Naive thymus-derived CD4-positive, alpha-beta T cell (primary cell): ENCODE measurements at regions of chr12 and their contacts with region 1.

Region 1: GRCh38 chr12:71840231-71840847 is 780 bp downstream of the TBC1D15 start:
- DNase-seq: peak in 2 of 9 donors; percentile 22 to 59
- ATAC-seq: peak; percentile 21
- H3K4me3 ChIP-seq: peak overlapping the region; percentile 80
- H3K4me3 Mint-ChIP-seq: peak overlapping the region; percentile 91 to 97 (median 94)
- H3K27ac ChIP-seq: peak overlapping the region; percentile 96
- H3K27ac Mint-ChIP-seq: peak overlapping the region; percentile 96 to 100 (median 99)
- H3K4me1 ChIP-seq: peaks cover 14 to 35% of the 10 kb centered on the region in 2 donors
- H3K4me1 Mint-ChIP-seq: peaks cover 29 to 69% (median 48%) of the 10 kb centered on the region in 7 donors
- H3K27me3 ChIP-seq: no peaks in the 10 kb centered on the region
- H3K27me3 Mint-ChIP-seq: no peaks in the 10 kb centered on the region

Region 2: DNA sequence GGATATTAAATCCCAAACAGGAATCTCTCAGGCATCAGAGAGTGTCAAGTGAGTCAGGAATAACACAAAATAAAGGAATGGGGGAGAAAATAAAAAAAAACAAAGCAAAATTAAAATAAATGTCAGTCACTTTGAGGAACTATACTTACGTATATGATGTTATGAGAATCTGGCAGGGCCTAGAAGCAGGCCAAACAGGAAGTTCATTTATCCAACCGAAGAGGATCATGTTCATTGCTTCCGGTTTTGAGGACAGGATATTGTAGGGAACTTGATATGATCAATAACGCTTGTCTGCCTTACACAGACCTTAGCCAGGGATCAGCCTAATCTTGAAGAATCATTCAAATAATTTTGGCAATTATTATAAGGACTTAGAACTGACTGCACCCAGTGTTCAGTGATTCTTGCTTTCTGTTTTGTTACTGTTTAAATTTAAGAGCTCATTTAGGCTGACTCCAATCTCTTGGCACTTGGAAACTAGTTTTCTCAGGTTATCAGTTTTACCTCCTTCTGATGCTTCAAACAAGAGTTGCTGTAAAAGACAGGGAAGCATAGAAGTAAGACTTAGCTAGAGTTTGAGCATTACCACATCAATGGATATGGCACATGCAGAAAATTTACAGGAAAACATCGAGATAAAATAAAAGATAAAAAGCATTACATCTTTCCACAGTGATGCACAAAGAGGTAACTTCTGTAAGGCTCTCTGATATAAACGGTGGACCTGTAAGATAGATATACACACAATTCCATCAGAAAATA is 230.1 kb before region 1 on chr12:
- CTCF ChIA-PET with region 1: no interaction called
- POLR2A ChIA-PET with region 1: no interaction called
- intact Hi-C with region 1: loop called in 1 of 2 experiments (anchors 5 kb)
- DNase-seq: peak in 7 of 9 donors; percentile 8 to 43 (median 24)
- ATAC-seq: peak; percentile 70
- H3K4me3 ChIP-seq: no peak overlapping the region
- H3K4me3 Mint-ChIP-seq: peak overlapping the region in 9 of 10 donors; percentile 7 to 80 (median 62)
- H3K27ac ChIP-seq: peak overlapping the region; percentile 67
- H3K27ac Mint-ChIP-seq: peak overlapping the region; percentile 79 to 98 (median 91)
- H3K4me1 ChIP-seq: peaks cover 0 to 8% of the 10 kb centered on the region in 2 donors
- H3K4me1 Mint-ChIP-seq: peaks cover 7 to 48% (median 33%) of the 10 kb centered on the region in 7 donors
- H3K27me3 ChIP-seq: no peaks in the 10 kb centered on the region
- H3K27me3 Mint-ChIP-seq: no peaks in the 10 kb centered on the region

Region 3: GRCh38 chr12:71685914-71686665 is 154.2 kb before region 1 on chr12 and contains the start of gene TMEM19:
- CTCF ChIA-PET with region 1: no interaction called
- POLR2A ChIA-PET with region 1: interaction called, 18 read pairs
- intact Hi-C with region 1: loop called (anchors 1 kb)
- DNase-seq: peak; percentile 78 to 88 (median 86)
- ATAC-seq: peak; percentile 90
- H3K4me3 ChIP-seq: peak within 1 kb of the TSS; percentile 96
- H3K4me3 Mint-ChIP-seq: peak within 1 kb of the TSS; percentile 85 to 99 (median 94)
- H3K27ac ChIP-seq: peak within 1 kb of the TSS; percentile 87
- H3K27ac Mint-ChIP-seq: peak within 1 kb of the TSS; percentile 85 to 97 (median 91)
- H3K4me1 ChIP-seq: peaks cover 21 to 23% of the 10 kb centered on the region in 2 donors
- H3K4me1 Mint-ChIP-seq: peaks cover 15 to 55% (median 38%) of the 10 kb centered on the region in 7 donors
- H3K27me3 ChIP-seq: no peaks in the 10 kb centered on the region
- H3K27me3 Mint-ChIP-seq: no peaks in the 10 kb centered on the region
- total RNA-seq, gene TMEM19: 13.9 to 17.7 (median 14.7) TPM

Region 4: DNA sequence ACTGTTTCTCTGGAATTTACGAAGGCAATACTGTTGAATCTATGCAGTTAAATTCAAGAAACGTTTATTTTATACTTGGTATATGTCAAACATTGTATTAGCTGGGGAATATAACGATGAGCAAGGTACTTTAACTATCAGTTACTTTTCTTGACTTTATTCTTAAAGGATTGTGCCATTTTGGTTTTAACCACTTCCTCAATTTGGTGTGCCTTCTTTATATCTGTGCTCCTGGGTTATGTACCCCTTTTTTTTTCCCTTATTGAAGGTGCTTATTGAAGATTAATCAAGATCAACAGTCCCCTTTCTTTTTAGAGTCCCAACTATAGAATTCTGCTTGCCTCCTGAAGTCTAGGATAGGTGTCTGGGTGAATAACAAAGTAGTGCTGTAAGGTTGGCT is 79.9 kb before region 1 on chr12:
- CTCF ChIA-PET with region 1: no interaction called
- POLR2A ChIA-PET with region 1: interaction called, 38 read pairs
- intact Hi-C with region 1: no loop called
- DNase-seq: no peak
- ATAC-seq: no peak
- H3K4me3 ChIP-seq: no peak overlapping the region
- H3K4me3 Mint-ChIP-seq: peak overlapping the region in 4 of 10 donors; percentile 9 to 57 (median 42)
- H3K27ac ChIP-seq: no peak overlapping the region
- H3K27ac Mint-ChIP-seq: peak overlapping the region in 3 of 9 donors; percentile 34 to 62 (median 36)
- H3K4me1 ChIP-seq: peaks cover 13 to 16% of the 10 kb centered on the region in 2 donors
- H3K4me1 Mint-ChIP-seq: peaks cover 36 to 77% (median 71%) of the 10 kb centered on the region in 7 donors
- H3K27me3 ChIP-seq: no peaks in the 10 kb centered on the region
- H3K27me3 Mint-ChIP-seq: no peaks in the 10 kb centered on the region

Region 5: GRCh38 chr12:71857657-71858056 is 17.3 kb after region 1 on chr12:
- CTCF ChIA-PET with region 1: no interaction called
- POLR2A ChIA-PET with region 1: interaction called, 4 read pairs
- intact Hi-C with region 1: loop called in 1 of 2 experiments (anchors 2 kb)
- DNase-seq: no peak
- ATAC-seq: no peak
- H3K4me3 ChIP-seq: no peak overlapping the region
- H3K4me3 Mint-ChIP-seq: peak overlapping the region in 1 of 10 donors; percentile 5
- H3K27ac ChIP-seq: no peak overlapping the region
- H3K27ac Mint-ChIP-seq: peak overlapping the region in 2 of 9 donors; percentile 10 to 48
- H3K4me1 ChIP-seq: no peaks in the 10 kb centered on the region
- H3K4me1 Mint-ChIP-seq: peaks cover 20 to 91% (median 75%) of the 10 kb centered on the region in 7 donors
- H3K27me3 ChIP-seq: no peaks in the 10 kb centered on the region
- H3K27me3 Mint-ChIP-seq: no peaks in the 10 kb centered on the region

Region 6: DNA sequence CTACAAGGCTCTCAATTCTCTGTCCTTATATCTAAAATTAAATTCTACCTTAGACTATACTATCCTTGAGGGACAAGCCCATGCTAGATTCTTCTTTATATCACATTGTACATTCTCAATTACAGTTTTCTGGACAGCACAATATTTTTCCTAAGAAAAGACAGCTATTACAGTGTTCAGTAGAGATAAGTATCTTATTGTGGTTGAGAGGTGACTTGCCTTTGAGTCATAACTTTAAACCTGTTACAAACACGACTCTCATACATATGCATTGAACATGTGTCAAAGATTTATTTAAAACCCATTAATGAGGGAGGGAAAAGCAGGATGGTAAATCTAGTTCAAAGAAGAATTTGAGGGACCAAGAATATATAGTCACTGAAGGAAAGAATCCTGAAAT is 159.5 kb after region 1 on chr12:
- CTCF ChIA-PET with region 1: no interaction called
- POLR2A ChIA-PET with region 1: no interaction called
- intact Hi-C with region 1: no loop called
- DNase-seq: no peak
- ATAC-seq: no peak
- H3K4me3 ChIP-seq: no peak overlapping the region
- H3K4me3 Mint-ChIP-seq: no peak overlapping the region
- H3K27ac ChIP-seq: no peak overlapping the region
- H3K27ac Mint-ChIP-seq: no peak overlapping the region
- H3K4me1 ChIP-seq: no peaks in the 10 kb centered on the region
- H3K4me1 Mint-ChIP-seq: no peaks in the 10 kb centered on the region
- H3K27me3 ChIP-seq: no peaks in the 10 kb centered on the region
- H3K27me3 Mint-ChIP-seq: peaks cover 10 to 28% (median 21%) of the 10 kb centered on the region in 5 donors